ENCODE measurements at regions of chr15 and their contacts with region 1.

Region 1: GRCh38 chr15:98896802-98897732 is 110.5 kb downstream of the PGPEP1L start:
- DNase-seq: no peak
- ATAC-seq: no peak
- H3K4me3 ChIP-seq: no peak overlapping the region
- H3K4me3 Mint-ChIP-seq: no peak overlapping the region
- H3K27ac ChIP-seq: no peak overlapping the region
- H3K27ac Mint-ChIP-seq: no peak overlapping the region
- H3K4me1 ChIP-seq: no peaks in the 10 kb centered on the region
- H3K4me1 Mint-ChIP-seq: peaks cover 12% of the 10 kb centered on the region
- H3K27me3 ChIP-seq: no peaks in the 10 kb centered on the region
- H3K27me3 Mint-ChIP-seq: no peaks in the 10 kb centered on the region
- CTCF ChIP-seq: no peak

Region 2: DNA sequence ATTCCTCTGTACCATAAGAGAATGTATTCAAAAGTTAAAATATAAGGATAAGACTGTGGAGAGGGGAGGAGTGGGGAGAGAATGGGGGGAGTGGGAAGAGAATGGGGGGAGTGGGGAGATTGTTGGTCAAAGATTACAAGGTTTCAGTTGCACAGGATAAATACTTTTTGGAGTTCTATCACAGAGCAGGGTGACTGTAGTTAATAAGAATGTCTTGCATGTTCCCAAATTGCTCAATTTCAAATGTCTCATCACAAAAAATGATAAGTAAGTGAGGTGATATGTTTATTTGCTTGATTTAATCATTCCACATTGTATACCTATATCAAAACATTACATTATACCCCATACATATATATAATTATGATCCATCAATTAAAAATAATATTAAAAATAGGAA is 645.8 kb after region 1 on chr15:
- CTCF ChIA-PET with region 1: no interaction called
- POLR2A ChIA-PET with region 1: no interaction called
- intact Hi-C with region 1: loop called in 1 of 2 experiments (anchors 5 kb)
- DNase-seq: no peak
- ATAC-seq: no peak
- H3K4me3 ChIP-seq: no peak overlapping the region
- H3K4me3 Mint-ChIP-seq: no peak overlapping the region
- H3K27ac ChIP-seq: no peak overlapping the region
- H3K27ac Mint-ChIP-seq: no peak overlapping the region
- H3K4me1 ChIP-seq: no peaks in the 10 kb centered on the region
- H3K4me1 Mint-ChIP-seq: no peaks in the 10 kb centered on the region
- H3K27me3 ChIP-seq: peaks cover 0 to 2% of the 10 kb centered on the region in 2 experiments
- H3K27me3 Mint-ChIP-seq: no peaks in the 10 kb centered on the region
- CTCF ChIP-seq: no peak

Measured in CD4-positive, alpha-beta T cell (primary cell).